Activated CD4-positive, alpha-beta T cell treated with anti-CD3 and anti-CD28 coated beads for 36 hours (primary cell): ENCODE measurements at regions of chr9 and their contacts with region 1.

Region 1: DNA sequence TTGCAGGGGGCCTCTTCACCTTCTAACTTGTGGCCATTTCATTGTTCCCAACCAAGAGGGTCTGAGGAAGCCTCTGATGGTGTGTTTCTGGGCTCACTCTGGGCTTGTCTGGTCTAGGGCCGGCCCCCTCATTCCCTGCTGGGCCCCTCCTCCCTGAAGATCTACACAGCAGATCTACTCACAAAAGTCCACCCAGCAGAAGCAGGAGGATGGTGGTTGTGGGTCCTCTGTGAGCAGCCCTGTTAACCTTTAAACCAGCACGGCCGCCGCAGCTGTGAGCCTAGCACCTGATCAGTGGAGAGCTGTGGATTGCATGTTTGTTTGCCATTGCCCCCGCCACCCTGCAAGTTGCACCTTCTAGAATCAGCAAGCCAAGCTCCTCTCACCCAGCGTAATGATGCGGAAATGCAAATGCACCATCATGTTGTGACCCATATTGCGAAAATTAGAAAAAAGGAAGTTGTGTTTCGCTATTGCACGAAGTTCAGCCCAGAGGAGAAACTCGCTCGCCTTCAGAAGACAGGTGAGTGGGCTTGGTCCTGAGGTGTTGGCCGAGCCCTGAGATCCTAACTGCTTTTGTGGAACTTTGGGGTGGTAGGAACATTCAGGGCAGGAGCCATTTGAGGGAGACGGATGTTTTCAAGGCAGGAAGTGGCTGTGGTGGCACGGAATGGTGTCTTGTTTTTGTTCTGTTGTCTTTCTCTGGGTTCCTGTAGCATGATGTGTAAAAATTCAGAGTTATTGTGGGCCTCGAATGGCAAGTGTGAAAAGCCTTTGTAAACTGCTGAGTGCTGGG is 16.7 kb downstream of the FGD3 start:
- DNase-seq: peak; percentile 83
- ATAC-seq: peak; percentile 59
- H3K4me3 Mint-ChIP-seq: peak overlapping the region; percentile 89
- H3K27ac Mint-ChIP-seq: peak overlapping the region; percentile 99
- H3K4me1 Mint-ChIP-seq: peaks cover 56% of the 10 kb centered on the region
- H3K27me3 Mint-ChIP-seq: no peaks in the 10 kb centered on the region

Region 2: DNA sequence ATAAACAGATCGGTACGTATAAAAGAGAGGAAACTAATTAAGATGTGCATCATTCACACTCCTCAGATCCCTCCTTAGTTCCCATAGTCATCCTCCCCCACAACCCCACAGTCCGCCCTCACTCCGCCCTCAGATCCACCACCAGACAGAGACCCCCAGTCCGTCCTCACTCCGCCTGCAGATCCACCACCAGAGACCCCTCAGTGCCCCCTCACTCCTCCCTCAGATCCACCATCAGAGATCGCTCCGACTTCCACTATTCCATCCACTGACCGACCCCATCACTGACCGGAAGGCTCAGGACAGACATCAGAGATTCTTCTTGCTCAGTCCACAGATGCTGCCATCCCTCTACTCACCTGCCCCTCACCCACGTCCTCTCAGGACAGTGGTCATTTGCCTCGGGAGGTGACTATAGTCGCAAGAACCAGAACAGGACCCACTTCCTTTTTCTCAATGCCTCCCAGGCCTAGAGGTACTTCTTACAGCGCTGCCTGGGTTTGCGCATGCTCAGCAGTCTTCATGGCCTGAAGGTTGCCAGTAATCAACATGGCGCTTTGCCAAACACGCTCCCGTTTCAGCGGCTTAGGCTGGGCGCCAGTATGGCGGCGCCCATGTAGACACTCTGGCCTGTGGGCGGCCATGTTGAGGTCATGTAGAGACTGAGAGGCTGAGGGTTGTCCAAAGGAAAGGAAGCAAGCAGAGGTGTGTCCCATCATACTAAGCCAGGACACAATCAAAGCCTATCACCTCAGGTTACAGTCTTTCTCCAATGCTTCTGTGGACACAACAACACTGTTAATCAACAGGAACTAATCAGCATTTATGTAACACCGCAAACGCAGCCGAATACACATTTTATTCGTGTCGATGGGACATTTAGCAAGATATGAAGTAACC is 86.2 kb before region 1 on chr9 and contains the start of gene ZNF484:
- CTCF ChIA-PET with region 1: no interaction called
- POLR2A ChIA-PET with region 1: no interaction called
- intact Hi-C with region 1: loop called in 1 of 2 experiments (anchors 5 kb)
- DNase-seq: peak; percentile 98
- ATAC-seq: peak; percentile 97
- H3K4me3 Mint-ChIP-seq: peak within 1 kb of the TSS; percentile 99
- H3K27ac Mint-ChIP-seq: peak within 1 kb of the TSS; percentile 97
- H3K4me1 Mint-ChIP-seq: peaks cover 46% of the 10 kb centered on the region
- H3K27me3 Mint-ChIP-seq: no peaks in the 10 kb centered on the region
- total RNA-seq, gene ZNF484: 7.2 to 9.8 TPM

Region 3: DNA sequence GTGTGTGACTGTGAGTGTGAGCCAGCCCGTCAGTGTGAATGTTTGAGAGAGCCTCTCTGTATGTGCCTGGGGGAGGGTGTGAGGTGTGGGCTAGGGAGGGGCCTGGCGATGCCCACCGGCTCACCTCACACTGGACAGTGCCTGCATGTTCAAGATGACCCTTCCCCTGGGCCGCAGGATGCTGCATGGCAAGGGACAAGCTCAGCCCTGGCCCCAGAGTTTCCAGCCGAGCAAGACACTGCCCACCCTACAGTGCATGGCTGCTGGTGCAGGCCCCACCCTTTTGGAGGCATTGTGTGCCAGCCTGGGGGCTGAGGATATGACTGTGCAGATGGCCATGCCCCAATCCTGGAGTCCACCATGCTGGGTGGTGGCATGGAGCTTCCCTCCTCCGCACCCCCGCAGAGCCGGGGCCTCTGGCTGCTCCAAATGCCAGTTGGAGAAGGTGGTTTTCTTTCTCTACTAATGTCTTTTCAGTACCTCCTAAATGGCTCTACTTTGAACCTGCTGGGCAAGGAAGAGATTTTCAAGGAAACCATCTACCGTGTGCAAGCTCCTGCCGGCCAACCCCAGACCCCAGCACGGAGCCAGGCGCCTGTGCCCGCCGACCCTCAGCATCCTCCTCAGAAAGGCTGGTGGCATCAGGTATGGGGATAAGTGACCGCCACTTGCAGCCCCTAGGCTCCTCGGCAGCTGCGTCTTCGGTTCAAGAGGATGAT is 10.9 kb after region 1 on chr9:
- CTCF ChIA-PET with region 1: no interaction called
- POLR2A ChIA-PET with region 1: no interaction called
- intact Hi-C with region 1: no loop called
- DNase-seq: peak; percentile 3
- ATAC-seq: no peak
- H3K4me3 Mint-ChIP-seq: no peak overlapping the region
- H3K27ac Mint-ChIP-seq: peak overlapping the region; percentile 23
- H3K4me1 Mint-ChIP-seq: peaks cover 90% of the 10 kb centered on the region
- H3K27me3 Mint-ChIP-seq: no peaks in the 10 kb centered on the region

Region 4: DNA sequence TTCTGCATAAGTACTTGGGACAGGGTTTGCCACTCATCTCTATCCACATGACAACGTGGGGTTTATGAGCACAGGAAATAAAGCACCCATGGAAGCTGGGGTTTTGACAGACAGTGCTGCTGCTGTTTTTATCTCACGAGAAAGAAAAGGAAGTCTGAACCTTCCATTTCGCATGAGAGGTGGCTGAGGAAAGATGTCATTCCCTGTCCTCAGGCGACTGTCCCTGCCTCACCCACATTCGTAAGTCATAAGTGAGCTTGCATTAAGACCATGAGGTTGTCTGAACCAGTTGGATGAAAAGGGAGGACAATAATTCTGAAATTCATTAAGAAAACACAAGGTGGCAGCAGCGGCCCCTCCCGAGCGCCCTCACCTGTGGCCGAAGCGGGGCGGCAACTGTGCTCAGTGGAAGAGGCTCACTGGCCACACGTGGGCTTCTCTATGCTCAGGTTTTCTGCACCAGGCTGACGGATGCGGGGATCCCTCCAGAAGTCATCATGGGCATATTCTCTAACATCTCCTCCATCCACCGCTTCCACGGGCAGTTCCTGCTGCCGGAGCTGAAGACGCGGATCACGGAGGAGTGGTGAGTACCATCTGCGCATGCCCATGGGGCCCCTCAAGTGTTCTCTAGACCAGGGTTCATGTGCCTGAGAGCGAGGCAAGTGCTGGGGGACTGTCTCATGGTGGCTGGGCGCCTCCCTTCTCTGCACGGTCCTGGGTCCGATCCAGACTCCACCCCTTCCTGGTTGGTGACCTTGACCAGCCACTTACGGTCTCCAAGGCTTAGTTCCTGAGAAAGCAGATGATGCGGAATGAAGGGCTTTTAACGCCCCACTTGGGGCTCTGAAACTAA is 39.8 kb after region 1 on chr9:
- CTCF ChIA-PET with region 1: interaction called, 4 read pairs
- POLR2A ChIA-PET with region 1: no interaction called
- intact Hi-C with region 1: loop called in 1 of 2 experiments (anchors 2 kb)
- DNase-seq: peak; percentile 83
- ATAC-seq: peak; percentile 90
- H3K4me3 Mint-ChIP-seq: no peak overlapping the region
- H3K27ac Mint-ChIP-seq: peak overlapping the region; percentile 65
- H3K4me1 Mint-ChIP-seq: peaks cover 57% of the 10 kb centered on the region
- H3K27me3 Mint-ChIP-seq: no peaks in the 10 kb centered on the region

Region 5: GRCh38 chr9:93064392-93065134 is 100.5 kb after region 1 on chr9:
- CTCF ChIA-PET with region 1: no interaction called
- POLR2A ChIA-PET with region 1: interaction called, 5 read pairs
- intact Hi-C with region 1: loop called (anchors 2 to 5 kb)
- DNase-seq: peak; percentile 96
- ATAC-seq: peak; percentile 90
- H3K4me3 Mint-ChIP-seq: peak overlapping the region; percentile 76
- H3K27ac Mint-ChIP-seq: peak overlapping the region; percentile 98
- H3K4me1 Mint-ChIP-seq: peaks cover 94% of the 10 kb centered on the region
- H3K27me3 Mint-ChIP-seq: no peaks in the 10 kb centered on the region

Region 6: DNA sequence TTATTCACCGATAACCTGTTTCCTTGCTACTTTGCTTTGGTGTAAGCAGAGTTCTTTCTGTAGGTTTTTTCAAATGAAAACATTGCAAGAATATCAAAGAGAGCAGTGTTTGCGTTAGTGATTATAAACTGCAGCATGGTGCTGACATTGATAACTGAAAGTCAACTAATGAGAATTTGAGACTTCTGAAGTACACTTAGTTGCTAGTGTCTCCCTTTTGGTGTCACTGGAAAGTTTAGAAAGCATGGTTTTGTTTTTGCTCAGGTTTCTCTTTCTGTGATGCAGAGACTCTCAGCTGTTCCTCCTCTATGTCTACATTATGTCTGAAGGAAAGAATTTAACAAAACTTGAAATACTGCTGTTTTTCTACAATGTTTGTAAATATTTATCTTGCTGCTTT is 1214.9 kb after region 1 on chr9:
- CTCF ChIA-PET with region 1: no interaction called
- POLR2A ChIA-PET with region 1: no interaction called
- intact Hi-C with region 1: loop called in 1 of 2 experiments (anchors 10 kb)
- DNase-seq: no peak
- ATAC-seq: peak; percentile 73
- H3K4me3 Mint-ChIP-seq: no peak overlapping the region
- H3K27ac Mint-ChIP-seq: peak overlapping the region; percentile 60
- H3K4me1 Mint-ChIP-seq: peaks cover 85% of the 10 kb centered on the region
- H3K27me3 Mint-ChIP-seq: no peaks in the 10 kb centered on the region